ENCODE measurements at regions of chr15 and their contacts with region 1.

Region 1: DNA sequence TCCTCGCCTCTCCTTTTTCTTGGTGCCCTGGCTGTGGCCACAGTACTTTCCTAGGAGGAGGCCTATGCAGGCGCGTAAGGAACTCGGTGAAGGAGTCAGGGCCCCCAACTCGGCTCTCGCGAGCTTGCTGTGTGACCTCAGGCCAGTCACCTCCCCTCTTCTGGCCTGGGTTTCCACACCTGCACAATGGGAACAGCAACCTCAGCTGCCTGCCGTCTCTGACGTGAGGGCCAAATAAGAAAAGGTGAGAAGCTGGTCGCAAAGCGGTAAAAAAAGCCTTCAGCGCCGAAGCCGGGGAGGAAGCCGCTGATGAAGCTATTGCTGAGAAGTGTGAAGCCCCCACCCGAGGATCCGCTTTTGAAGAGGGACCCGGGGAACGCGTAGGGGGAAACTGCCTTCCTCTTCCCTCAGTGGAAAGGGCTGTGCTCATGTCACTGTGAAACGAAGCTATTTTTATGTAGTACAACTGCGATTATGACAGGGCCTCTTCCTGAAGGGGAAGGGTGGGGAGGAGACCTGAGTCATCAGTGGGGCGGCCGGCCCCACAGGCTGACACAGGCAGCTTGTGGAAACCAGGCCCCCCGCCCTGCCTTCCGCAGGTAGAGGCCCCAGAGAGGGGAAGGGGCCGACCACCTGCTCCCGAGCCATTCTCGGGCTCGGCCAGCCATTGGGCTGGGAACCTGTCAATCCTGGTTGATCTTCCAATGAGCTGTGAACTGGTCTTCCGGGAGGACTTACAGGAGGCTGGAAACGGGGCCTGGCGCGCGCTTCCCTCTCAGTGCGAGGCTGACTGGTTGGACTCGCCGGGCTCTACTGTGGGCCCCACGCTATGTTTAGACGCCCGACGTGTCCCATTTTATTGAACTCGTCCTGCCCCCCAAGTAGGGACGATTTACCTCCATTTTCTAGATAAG is 18.0 kb upstream of the ANKDD1A start:
- DNase-seq: peak; percentile 99
- ATAC-seq: peak; percentile 81
- H3K4me3 ChIP-seq: peak overlapping the region; percentile 78
- H3K27ac ChIP-seq: peak overlapping the region; percentile 97
- H3K4me1 ChIP-seq: peaks cover 42% of the 10 kb centered on the region
- H3K27me3 ChIP-seq: no peaks in the 10 kb centered on the region
- CTCF ChIP-seq: no peak
- EP300 ChIP-seq: peak in 1 of 2 experiments; percentile 72; a peak in 2 of 4 replicates
- POLR2A ChIP-seq: peak; percentile 86
- RAD21 ChIP-seq: no peak; the same call in 1 of the 2 replicates

Region 2: DNA sequence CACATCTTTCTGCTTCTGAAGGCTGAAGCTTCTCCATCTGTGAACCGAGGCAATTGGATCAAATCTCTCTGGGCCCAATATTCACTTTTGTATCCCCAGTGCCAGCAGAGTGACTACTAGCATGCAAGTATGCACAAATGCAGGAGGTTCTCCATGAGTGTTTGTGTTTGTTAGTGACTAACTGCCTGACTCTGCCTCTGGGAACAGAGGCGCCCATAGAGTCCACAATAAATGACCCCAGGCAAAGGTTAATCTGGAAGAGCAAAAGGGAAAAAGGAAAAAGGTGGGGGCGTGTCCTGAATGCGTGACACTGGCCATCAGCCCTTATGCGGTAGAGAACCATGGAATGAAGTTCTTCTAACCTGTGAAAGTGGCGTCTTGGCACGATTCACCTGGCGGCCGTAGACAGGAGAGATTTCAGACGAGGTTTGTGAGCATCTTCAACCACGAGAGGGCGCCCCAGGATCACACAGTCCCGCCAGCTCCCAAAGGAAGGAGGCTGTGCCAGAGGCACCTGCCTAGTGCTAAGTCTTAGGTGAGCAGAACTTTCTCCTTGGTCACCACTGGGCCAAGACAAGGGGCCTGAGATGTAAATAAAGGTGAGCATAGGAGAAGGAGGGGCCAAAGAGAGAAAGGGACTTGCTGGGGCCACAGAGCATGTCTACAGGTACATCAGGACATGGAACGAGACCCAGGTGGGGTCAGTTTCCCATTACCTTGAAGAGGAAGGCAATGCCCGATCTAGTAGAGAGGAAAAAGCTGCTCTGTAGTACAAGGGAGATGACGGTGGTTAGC is 162.5 kb before region 1 on chr15:
- CTCF ChIA-PET with region 1: interaction called, 12 read pairs
- POLR2A ChIA-PET with region 1: no interaction called
- RAD21 ChIA-PET with region 1: interaction called, 29 read pairs
- SMC1A ChIA-PET with region 1: interaction called, 30 read pairs
- in situ Hi-C with region 1: no loop called
- intact Hi-C with region 1: loop called (anchors 5 kb)
- DNase-seq: peak; percentile 36
- ATAC-seq: peak; percentile 91
- H3K4me3 ChIP-seq: no peak overlapping the region
- H3K27ac ChIP-seq: no peak overlapping the region
- H3K4me1 ChIP-seq: peaks cover 11% of the 10 kb centered on the region
- H3K27me3 ChIP-seq: no peaks in the 10 kb centered on the region; a peak in 1 of 4 replicates
- CTCF ChIP-seq: peak; percentile 85 to 96 (median 86)
- EP300 ChIP-seq: no peak
- POLR2A ChIP-seq: no peak
- RAD21 ChIP-seq: peak; percentile 98

Region 3: DNA sequence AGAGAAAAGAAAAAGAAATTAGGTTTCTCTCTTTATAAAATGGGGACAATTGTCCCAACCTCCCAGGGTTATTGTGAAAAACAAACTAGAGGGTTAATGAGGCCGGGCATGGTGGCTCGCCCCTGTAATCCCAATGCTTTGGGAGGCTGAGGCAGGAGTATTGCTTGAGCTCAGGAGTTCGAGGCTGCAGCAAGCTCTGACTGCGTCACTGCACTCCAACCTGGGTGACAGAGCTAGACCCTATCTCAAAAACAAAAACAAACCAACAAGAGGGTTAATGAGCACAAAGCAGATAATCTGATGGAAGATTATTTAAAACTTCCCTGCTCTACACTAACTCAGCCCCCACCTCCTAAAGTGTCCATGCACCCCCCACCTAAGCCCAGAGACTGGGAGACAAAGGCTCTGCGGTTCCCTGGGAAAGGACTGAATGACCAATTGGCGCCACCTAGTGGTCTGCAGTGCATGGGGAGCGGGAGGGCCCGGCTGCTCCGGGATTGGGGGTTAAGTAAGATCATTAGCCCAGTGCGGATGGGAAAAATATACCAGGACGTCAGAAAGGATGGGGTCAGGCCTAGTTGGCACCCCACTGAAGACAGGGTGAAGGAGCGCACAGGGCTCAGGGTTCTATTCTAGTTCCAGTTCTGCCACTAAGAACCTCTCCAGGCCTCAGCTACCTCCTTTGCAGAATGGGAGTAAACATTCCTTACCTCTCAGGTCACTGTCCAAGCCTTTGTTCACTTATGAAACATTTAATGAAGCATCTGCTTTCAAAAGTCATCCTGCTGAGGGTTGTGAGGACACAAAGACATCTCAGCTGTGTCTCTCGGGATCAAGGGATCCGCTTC is 83.9 kb before region 1 on chr15:
- CTCF ChIA-PET with region 1: interaction called, 74 read pairs
- POLR2A ChIA-PET with region 1: interaction called, 38 read pairs
- RAD21 ChIA-PET with region 1: interaction called, 104 read pairs
- SMC1A ChIA-PET with region 1: interaction called, 87 read pairs
- in situ Hi-C with region 1: no loop called
- intact Hi-C with region 1: no loop called
- DNase-seq: no peak
- ATAC-seq: peak; percentile 58
- H3K4me3 ChIP-seq: no peak overlapping the region
- H3K27ac ChIP-seq: no peak overlapping the region
- H3K4me1 ChIP-seq: peaks cover 17% of the 10 kb centered on the region
- H3K27me3 ChIP-seq: no peaks in the 10 kb centered on the region
- CTCF ChIP-seq: peak; percentile 92 to 95 (median 95)
- EP300 ChIP-seq: no peak
- POLR2A ChIP-seq: no peak
- RAD21 ChIP-seq: peak; percentile 92

Region 4: DNA sequence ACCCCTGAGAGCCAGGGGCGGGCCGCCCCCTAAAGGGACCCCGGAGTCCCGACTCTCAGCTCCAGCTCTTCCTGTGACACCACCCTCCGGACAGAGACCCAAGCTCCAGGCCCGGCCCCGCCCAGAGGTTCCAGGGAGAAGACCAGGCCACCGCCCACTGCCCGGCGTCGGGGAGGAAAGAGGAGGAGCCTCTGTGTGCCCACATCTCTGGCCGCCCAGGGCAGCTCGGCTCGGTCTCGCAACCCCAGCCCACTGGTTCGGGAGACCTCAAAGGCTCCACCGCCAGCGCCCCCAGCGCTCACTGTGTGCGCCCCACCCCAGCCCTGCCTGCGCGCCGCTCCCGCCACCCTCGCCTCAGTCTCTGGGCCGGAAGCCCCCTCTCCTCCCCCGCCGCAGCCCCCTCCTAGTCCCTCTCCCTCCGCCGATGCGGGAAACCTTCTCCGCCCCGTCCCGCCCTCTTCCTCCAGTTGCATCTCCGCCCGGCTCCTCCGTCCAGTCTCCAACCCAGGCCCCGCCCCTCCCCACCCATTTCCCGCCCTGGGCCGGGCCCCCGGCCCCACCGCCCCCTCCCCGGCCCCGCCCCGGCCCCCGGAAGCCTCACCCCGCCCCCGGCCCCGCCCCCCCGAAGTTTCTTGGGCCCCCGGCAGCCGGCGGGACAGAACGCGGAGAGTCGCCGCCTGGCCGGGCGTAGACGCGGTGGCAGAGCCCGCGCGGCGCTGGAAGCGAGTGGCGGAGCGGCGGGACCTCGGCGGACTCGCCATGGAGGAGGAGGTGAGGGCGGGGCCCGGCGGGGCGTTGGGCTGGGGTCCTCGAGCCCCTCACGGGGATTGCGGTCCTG is 52.3 kb before region 1 on chr15 and contains the start of gene PLEKHO2:
- CTCF ChIA-PET with region 1: interaction called, 78 read pairs
- POLR2A ChIA-PET with region 1: interaction called, 127 read pairs
- RAD21 ChIA-PET with region 1: interaction called, 129 read pairs
- SMC1A ChIA-PET with region 1: interaction called, 116 read pairs
- in situ Hi-C with region 1: no loop called
- intact Hi-C with region 1: loop called (anchors 1 kb)
- DNase-seq: peak; percentile 53
- ATAC-seq: peak; percentile 75
- H3K4me3 ChIP-seq: peak within 1 kb of the TSS; percentile 99
- H3K27ac ChIP-seq: peak within 1 kb of the TSS; percentile 67
- H3K4me1 ChIP-seq: peaks cover 12% of the 10 kb centered on the region
- H3K27me3 ChIP-seq: no peaks in the 10 kb centered on the region
- CTCF ChIP-seq: peak; percentile 6 to 41 (median 11); a peak in 2 of 6 replicates
- EP300 ChIP-seq: no peak
- POLR2A ChIP-seq: peak; percentile 96
- RAD21 ChIP-seq: no peak
- polyA plus RNA-seq, gene PLEKHO2: 1.4 to 3.1 TPM

Region 5: DNA sequence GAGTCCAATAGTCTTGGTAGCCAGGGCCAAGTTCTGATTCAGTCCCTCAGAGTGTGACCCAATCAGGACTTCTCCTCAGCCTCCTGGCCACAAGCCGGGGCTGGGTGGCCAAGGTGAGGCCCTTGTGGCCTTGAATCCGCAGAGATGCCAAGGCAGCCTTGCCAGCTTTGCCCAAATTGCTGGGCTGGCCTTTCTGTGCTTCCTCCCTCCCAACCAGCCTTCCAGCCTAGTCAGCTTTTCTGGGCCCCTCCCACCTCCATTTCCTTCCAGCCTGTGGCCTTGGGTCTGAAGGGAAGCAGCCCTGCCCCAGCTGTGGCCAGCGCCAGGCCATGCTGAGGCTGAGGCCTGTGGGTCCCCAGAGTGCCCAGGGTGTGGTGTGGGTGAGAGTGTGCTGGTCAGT is 16.3 kb before region 1 on chr15:
- CTCF ChIA-PET with region 1: interaction called, 72 read pairs
- POLR2A ChIA-PET with region 1: interaction called, 136 read pairs
- RAD21 ChIA-PET with region 1: interaction called, 128 read pairs
- SMC1A ChIA-PET with region 1: interaction called, 118 read pairs
- in situ Hi-C with region 1: no loop called
- intact Hi-C with region 1: no loop called
- DNase-seq: no peak
- ATAC-seq: no peak; the same call in 2 of the 3 replicates
- H3K4me3 ChIP-seq: no peak overlapping the region
- H3K27ac ChIP-seq: no peak overlapping the region
- H3K4me1 ChIP-seq: peaks cover 23% of the 10 kb centered on the region
- H3K27me3 ChIP-seq: no peaks in the 10 kb centered on the region
- CTCF ChIP-seq: no peak
- EP300 ChIP-seq: no peak
- POLR2A ChIP-seq: no peak
- RAD21 ChIP-seq: no peak

Region 6: GRCh38 chr15:64989416-64990167 is 95.9 kb after region 1 on chr15 and contains the start of gene SPG21:
- CTCF ChIA-PET with region 1: interaction called, 3 read pairs
- POLR2A ChIA-PET with region 1: interaction called, 8 read pairs
- RAD21 ChIA-PET with region 1: interaction called, 6 read pairs
- SMC1A ChIA-PET with region 1: interaction called, 5 read pairs
- in situ Hi-C with region 1: no loop called
- intact Hi-C with region 1: loop called (anchors 5 kb)
- DNase-seq: peak; percentile 91
- ATAC-seq: peak; percentile 95
- H3K4me3 ChIP-seq: peak within 1 kb of the TSS; percentile 82
- H3K27ac ChIP-seq: peak within 1 kb of the TSS; percentile 92
- H3K4me1 ChIP-seq: peaks cover 4% of the 10 kb centered on the region
- H3K27me3 ChIP-seq: no peaks in the 10 kb centered on the region
- CTCF ChIP-seq: no peak
- EP300 ChIP-seq: peak in 1 of 2 experiments; percentile 84; a peak in 2 of 4 replicates
- POLR2A ChIP-seq: peak; percentile 85
- RAD21 ChIP-seq: no peak
- polyA plus RNA-seq, gene SPG21: 25.5 to 29.6 TPM

Region 7: GRCh38 chr15:65304389-65305144 is 410.8 kb after region 1 on chr15 and contains the start of gene RNU5B-1:
- CTCF ChIA-PET with region 1: no interaction called
- POLR2A ChIA-PET with region 1: interaction called, 4 read pairs
- RAD21 ChIA-PET with region 1: no interaction called
- SMC1A ChIA-PET with region 1: no interaction called
- in situ Hi-C with region 1: no loop called
- intact Hi-C with region 1: loop called (anchors 5 kb)
- DNase-seq: peak; percentile 96
- ATAC-seq: peak; percentile 86
- H3K4me3 ChIP-seq: peak within 1 kb of the TSS; percentile 33
- H3K27ac ChIP-seq: peak within 1 kb of the TSS; percentile 97
- H3K4me1 ChIP-seq: peaks cover 10% of the 10 kb centered on the region
- H3K27me3 ChIP-seq: no peaks in the 10 kb centered on the region
- CTCF ChIP-seq: peak; percentile 82 to 91 (median 89)
- EP300 ChIP-seq: no peak
- POLR2A ChIP-seq: peak; percentile 96
- RAD21 ChIP-seq: peak; percentile 34; the same call in 1 of the 2 replicates
- polyA plus RNA-seq, gene RNU5B-1: not detected

Measured in GM12878 (cell line).